ENCODE measurements at regions of chr5 and their contacts with region 1.

Region 1: DNA sequence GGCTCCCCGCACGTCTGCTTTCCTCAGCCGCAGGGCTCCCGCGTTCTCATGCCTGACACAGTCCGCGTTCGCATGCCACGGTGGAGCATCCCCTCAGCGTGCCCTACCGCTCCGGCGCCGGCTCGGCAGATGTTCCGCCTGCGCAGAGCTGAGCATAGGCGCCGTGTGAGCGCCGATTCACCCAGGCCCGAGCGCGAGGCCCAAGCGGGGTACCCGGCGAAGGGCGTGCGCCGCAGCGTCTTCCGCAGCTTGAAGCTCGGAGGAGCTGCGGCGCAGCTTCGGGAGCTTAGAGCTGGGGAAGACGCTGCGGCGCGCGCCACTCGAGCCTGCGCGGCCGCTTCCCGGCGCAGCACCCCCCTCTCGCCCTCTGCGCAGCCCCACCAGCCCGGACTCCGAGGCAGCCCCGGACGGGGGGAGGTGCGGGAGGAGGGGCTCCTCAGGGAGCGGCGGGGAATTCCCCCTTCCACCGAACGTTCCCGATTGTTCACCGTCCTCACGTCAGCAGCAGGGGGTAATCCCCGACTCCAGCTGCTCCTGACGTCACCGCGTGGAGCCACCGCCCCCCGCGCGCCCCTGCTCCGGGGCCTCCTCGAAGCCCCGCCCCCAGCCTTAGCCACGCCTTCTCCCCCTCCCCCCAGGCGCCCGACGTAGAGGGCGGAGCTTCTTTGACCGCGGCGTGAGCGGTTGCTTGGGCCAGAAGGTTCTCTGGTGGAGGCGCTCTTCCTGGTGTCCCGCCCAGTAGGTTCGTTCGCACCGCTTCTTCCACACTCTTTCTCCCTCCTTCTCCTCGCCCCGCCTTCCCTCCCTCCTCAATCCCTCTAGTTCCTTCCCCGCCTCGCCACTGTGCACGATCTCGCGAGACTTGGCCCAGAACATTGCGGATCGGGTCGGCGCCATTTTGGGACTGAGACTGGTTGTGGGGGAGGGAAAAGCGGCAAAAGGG is at the start of gene GPBP1:
- DNase-seq: peak; percentile 96 to 99
- H3K4me3 ChIP-seq: peak within 1 kb of the TSS; percentile 83 to 99
- H3K27ac ChIP-seq: peak within 1 kb of the TSS; percentile 99
- H3K4me1 ChIP-seq: peaks cover 0 to 17% of the 10 kb centered on the region in 2 donors
- H3K27me3 ChIP-seq: no peaks in the 10 kb centered on the region
- CTCF ChIP-seq: no peak
- total RNA-seq, gene GPBP1: 21.2 TPM

Region 2: DNA sequence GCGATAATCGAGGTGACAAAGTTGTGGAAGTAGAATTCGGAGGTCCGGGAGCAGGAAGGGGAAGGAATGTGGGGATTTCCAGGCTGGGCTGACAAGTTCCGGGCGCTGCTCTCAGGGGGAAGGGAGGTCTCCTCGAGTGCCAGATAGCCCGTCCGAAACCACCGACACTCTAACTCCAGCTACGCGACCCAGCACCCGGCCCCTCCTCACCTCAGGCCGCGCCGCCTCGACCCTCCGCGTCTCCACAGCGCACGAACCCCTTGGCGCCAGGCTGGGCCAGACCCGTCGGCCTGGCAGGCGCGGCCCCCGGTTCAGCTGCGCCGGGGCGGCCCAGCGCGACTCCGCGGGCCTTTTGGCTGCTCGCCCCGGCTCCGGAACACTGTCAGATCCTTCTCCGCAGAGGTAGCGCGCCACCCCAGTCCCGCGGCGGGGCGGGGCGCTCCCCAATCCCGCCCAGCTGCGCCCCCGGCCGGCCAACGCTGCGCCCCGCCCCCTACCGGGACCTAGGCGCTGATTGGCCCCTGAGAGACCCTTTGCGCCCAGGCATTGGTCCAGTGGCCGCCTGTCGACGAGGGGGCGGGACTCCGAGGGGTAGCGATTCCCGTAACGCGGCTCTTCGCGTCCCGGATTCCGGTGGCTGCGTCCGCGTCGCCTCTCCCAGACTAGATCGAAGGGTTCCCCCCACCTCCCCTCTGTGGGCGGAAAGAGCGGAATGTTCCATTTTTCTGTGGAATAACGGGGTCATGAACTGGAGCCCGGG is 1178.7 kb before region 1 on chr5 and contains the start of gene IL6ST:
- intact Hi-C with region 1: loop called (anchors 1 kb)
- DNase-seq: peak; percentile 85 to 98
- H3K4me3 ChIP-seq: peak within 1 kb of the TSS; percentile 95 to 98
- H3K27ac ChIP-seq: peak within 1 kb of the TSS; percentile 99 to 100
- H3K4me1 ChIP-seq: peaks cover 0 to 11% of the 10 kb centered on the region in 2 donors
- H3K27me3 ChIP-seq: no peaks in the 10 kb centered on the region
- CTCF ChIP-seq: peak in 1 of 3 experiments; percentile 6
- total RNA-seq, gene IL6ST: 192 TPM

Region 3: DNA sequence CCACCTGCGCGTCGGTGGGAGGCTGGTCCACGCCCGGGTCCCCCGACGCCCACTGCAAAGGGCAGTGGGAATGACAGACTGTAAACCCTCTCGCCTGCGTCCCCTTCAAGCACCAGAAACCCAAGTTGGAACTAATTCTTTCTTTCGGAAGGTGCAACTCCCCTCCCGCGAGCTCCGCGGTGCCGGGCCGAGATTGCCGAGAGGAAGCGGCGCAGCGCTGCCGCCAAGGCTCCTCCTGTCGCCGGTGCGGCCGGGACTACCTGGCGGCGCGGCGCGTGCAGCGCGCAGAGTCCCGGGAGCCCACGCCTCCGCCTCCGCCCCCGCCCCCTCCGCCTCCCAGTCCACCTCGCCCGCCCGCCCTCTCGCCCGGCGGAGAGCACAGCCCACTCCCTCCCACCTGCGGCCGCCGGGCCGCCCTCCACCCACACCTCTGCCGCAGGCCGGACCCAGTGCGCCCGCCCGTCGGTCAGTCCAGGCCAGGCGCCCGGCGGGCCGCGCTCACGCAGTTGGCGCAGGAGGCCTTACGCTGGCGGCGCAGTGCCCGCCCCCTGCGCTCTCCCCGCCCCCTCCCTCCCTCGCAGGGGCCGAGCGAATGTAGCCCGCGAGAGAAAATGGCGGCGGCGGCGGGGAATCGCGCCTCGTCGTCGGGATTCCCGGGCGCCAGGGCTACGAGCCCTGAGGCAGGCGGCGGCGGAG is 358.3 kb before region 1 on chr5 and contains the start of gene MAP3K1:
- intact Hi-C with region 1: loop called (anchors 5 kb)
- DNase-seq: peak in 1 of 2 donors; percentile 85
- H3K4me3 ChIP-seq: peak within 1 kb of the TSS; percentile 91 to 97
- H3K27ac ChIP-seq: peak within 1 kb of the TSS; percentile 55 to 87
- H3K4me1 ChIP-seq: peaks cover 0 to 21% of the 10 kb centered on the region in 2 donors
- H3K27me3 ChIP-seq: no peaks in the 10 kb centered on the region
- CTCF ChIP-seq: peak in 1 of 3 experiments; percentile 16
- total RNA-seq, gene MAP3K1: 14.7 TPM

Region 4: DNA sequence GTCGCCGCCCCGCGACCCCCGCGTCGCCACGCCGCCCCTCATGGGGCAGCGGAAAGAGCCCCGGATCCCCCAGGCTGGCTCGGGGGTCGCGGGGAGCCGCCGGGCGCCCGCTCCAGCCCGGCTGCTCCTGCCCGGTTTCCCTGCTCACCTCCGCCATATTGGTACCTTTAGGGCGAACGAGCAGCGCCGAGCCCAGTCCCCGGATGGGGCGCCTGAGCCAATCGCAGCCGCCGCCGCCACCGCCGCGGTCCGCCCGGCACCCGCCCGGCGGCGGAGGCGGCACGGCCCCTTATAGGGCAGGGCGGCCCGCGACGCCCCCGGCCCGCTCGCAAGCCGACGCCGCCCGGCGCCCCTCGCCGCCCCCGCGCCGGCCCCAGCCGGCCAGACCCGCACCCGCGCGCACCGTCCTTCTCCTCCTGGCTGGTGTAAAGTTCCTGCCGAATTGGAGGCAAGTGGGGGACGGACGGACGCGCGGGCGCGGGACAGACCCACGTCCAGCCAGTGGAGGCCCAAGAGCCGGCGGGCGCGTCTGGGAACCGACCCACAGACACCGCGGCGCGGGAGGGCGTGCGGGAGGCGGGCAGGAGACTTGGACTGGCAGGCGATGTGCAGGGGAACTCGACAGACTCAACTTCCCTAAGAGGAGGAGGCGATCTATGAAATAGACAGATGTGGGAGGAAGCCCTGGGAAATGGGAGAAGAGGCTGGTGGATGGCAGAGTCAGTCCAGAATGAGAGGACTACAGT is 221.3 kb before region 1 on chr5 and contains the start of gene MIER3:
- intact Hi-C with region 1: loop called (anchors 1 kb)
- DNase-seq: peak; percentile 12 to 87
- H3K4me3 ChIP-seq: peak within 1 kb of the TSS; percentile 82 to 98
- H3K27ac ChIP-seq: peak within 1 kb of the TSS; percentile 87 to 92
- H3K4me1 ChIP-seq: peaks cover 0 to 2% of the 10 kb centered on the region in 2 donors
- H3K27me3 ChIP-seq: no peaks in the 10 kb centered on the region
- CTCF ChIP-seq: no peak
- total RNA-seq, gene MIER3: 5.5 TPM

Region 5: GRCh38 chr5:57229313-57229712 is 55.9 kb after region 1 on chr5:
- intact Hi-C with region 1: no loop called
- DNase-seq: no peak
- H3K4me3 ChIP-seq: no peak overlapping the region
- H3K27ac ChIP-seq: no peak overlapping the region
- H3K4me1 ChIP-seq: no peaks in the 10 kb centered on the region
- H3K27me3 ChIP-seq: no peaks in the 10 kb centered on the region
- CTCF ChIP-seq: no peak

Region 6: DNA sequence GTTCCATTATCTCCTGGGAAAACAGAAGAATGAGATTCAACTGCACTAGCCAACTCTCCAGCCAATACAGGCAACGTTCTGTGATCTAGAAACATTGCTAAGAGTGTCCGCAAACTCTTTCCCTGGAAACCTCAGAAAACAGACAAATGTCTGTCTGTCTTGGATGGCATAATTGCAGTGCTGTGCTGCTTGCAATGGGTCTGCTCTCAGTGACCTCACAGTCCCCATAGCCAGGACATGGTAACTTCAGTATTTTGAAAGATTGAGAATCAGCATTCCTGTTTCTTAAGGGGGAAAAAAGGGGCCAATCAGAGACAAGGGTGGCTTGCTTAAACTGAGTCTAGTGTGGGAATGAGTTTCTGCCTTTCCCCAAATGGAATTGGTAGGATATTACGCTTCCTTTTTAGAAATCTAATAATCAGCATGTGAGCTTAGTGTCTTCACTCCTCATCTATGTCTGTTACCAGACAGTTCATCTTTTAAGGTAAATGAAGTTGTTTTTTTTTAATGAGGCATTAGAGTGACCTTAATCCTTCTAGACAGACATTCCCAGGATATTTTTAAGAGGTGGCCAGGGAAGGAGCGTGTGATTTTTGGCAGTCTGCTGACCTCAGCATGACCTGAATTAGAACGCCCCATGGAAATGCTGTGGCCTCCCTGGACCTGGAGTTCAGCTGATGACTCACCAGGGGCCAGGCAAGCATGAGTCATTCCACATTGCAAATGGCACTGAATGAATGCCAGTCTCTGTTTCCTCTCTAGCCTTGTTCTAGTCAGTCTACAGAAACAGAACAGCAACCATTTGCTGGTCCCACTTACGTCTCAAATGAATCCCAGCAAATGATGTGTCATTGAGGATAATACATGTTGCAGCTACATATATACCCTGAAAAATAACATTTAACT is 519.4 kb after region 1 on chr5:
- intact Hi-C with region 1: loop called (anchors 10 kb)
- DNase-seq: peak; percentile 73 to 92
- H3K4me3 ChIP-seq: no peak overlapping the region
- H3K27ac ChIP-seq: peak overlapping the region; percentile 4 to 76
- H3K4me1 ChIP-seq: peaks cover 1 to 24% of the 10 kb centered on the region in 2 donors
- H3K27me3 ChIP-seq: no peaks in the 10 kb centered on the region
- CTCF ChIP-seq: no peak